ENCODE measurements at regions of chr20 and their contacts with region 1.

Region 1: DNA sequence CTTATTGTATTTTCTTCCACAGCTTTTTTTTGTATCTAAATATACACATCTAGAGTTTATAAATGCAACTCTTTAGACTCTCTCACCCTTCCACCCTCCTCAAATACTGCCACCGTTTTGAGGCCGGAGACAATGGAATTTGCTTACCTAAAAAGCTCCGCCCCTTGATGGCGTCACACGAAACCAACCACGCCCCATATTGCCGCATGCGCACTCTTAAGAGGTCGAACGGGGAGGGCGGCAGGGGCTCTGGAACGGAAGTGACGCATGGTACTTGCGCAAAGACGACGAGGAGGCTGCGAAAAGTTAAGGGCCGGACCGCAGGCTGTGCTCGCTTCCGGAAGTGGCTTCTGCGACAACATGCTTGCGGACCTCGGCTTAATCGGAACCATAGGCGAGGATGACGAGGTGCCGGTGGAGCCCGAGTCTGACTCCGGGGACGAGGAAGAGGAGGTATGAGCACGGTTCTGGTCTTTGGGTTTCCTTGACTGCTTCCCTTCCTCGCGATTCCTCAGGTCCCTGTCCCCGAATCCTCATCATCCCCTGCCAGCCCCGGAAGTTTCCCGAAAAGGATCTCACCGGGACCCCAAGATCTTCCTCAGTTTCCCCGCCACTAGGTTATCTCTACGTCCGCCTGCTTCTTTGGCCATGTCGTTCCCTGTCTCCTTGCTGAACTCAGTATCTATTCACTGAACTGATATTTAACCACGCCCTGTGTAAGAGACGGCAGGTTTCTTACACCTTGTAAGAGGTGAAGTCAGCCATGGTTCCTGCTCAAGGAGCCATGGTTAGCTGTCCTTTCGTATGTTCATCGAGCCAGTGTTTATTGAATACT is at the start of gene DDX27:
- DNase-seq: peak; percentile 92 to 99 (median 96)
- ATAC-seq: peak; percentile 79
- H3K4me3 ChIP-seq: peak within 1 kb of the TSS; percentile 90 to 99
- H3K4me3 Mint-ChIP-seq: peak within 1 kb of the TSS; percentile 91
- H3K27ac ChIP-seq: peak within 1 kb of the TSS; percentile 91 to 95
- H3K27ac Mint-ChIP-seq: peak within 1 kb of the TSS; percentile 96
- H3K4me1 ChIP-seq: peaks cover 13% of the 10 kb centered on the region
- H3K4me1 Mint-ChIP-seq: peaks cover 30% of the 10 kb centered on the region
- H3K27me3 ChIP-seq: no peaks in the 10 kb centered on the region
- H3K27me3 Mint-ChIP-seq: no peaks in the 10 kb centered on the region
- CTCF ChIP-seq: no peak
- total RNA-seq, gene DDX27: 129 to 141 TPM

Region 2: DNA sequence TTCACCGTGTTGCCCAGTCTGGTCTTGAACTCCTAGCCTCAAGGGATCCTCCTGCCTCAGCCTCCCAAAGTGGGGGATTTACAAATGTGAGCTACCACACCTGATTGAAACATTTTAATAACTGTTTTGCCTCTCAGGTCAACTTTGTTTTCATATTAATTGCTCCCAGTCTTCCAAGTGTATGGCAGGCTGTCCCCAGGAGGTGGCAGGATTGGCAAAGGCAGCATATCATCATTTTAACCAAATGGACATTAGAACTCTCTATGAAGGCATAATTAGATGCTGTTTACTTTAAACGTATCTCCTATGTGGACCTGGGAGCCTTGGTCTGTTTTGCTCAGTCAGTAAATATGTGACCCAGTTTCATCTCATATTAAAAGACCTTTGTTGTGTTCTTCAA is 232.4 kb before region 1 on chr20:
- CTCF ChIA-PET with region 1: interaction called, 10 read pairs
- POLR2A ChIA-PET with region 1: no interaction called
- intact Hi-C with region 1: no loop called
- DNase-seq: no peak
- ATAC-seq: no peak
- H3K4me3 ChIP-seq: no peak overlapping the region
- H3K4me3 Mint-ChIP-seq: no peak overlapping the region
- H3K27ac ChIP-seq: no peak overlapping the region
- H3K27ac Mint-ChIP-seq: no peak overlapping the region
- H3K4me1 ChIP-seq: no peaks in the 10 kb centered on the region
- H3K4me1 Mint-ChIP-seq: no peaks in the 10 kb centered on the region
- H3K27me3 ChIP-seq: no peaks in the 10 kb centered on the region
- H3K27me3 Mint-ChIP-seq: no peaks in the 10 kb centered on the region
- CTCF ChIP-seq: no peak

Region 3: GRCh38 chr20:49132995-49133478 is 86.3 kb before region 1 on chr20:
- CTCF ChIA-PET with region 1: interaction called, 174 read pairs
- POLR2A ChIA-PET with region 1: interaction called, 6 read pairs
- intact Hi-C with region 1: loop called (anchors 1 kb)
- DNase-seq: peak in 3 of 9 experiments; percentile 18 to 75 (median 65)
- ATAC-seq: peak; percentile 55
- H3K4me3 ChIP-seq: no peak overlapping the region
- H3K4me3 Mint-ChIP-seq: no peak overlapping the region
- H3K27ac ChIP-seq: no peak overlapping the region
- H3K27ac Mint-ChIP-seq: no peak overlapping the region
- H3K4me1 ChIP-seq: no peaks in the 10 kb centered on the region
- H3K4me1 Mint-ChIP-seq: peaks cover 5% of the 10 kb centered on the region
- H3K27me3 ChIP-seq: no peaks in the 10 kb centered on the region
- H3K27me3 Mint-ChIP-seq: no peaks in the 10 kb centered on the region
- CTCF ChIP-seq: peak; percentile 63

Region 4: GRCh38 chr20:49186535-49187329 is 32.6 kb before region 1 on chr20:
- CTCF ChIA-PET with region 1: interaction called, 29 read pairs
- POLR2A ChIA-PET with region 1: interaction called, 9 read pairs
- intact Hi-C with region 1: loop called (anchors 1 kb)
- DNase-seq: peak; percentile 22 to 84 (median 69)
- ATAC-seq: peak; percentile 41
- H3K4me3 ChIP-seq: peak overlapping the region; percentile 67 to 82
- H3K4me3 Mint-ChIP-seq: peak overlapping the region; percentile 85
- H3K27ac ChIP-seq: peak overlapping the region; percentile 46 to 81
- H3K27ac Mint-ChIP-seq: peak overlapping the region; percentile 77
- H3K4me1 ChIP-seq: peaks cover 41% of the 10 kb centered on the region
- H3K4me1 Mint-ChIP-seq: peaks cover 47% of the 10 kb centered on the region
- H3K27me3 ChIP-seq: peaks cover 0 to 2% of the 10 kb centered on the region in 2 experiments
- H3K27me3 Mint-ChIP-seq: no peaks in the 10 kb centered on the region
- CTCF ChIP-seq: no peak

Region 5: GRCh38 chr20:49936153-49937027 is 717.1 kb after region 1 on chr20 and contains the start of gene RNF114:
- CTCF ChIA-PET with region 1: no interaction called
- POLR2A ChIA-PET with region 1: no interaction called
- intact Hi-C with region 1: loop called (anchors 2 to 5 kb)
- DNase-seq: peak; percentile 82 to 95 (median 90)
- ATAC-seq: peak; percentile 96
- H3K4me3 ChIP-seq: peak within 1 kb of the TSS; percentile 96 to 99
- H3K4me3 Mint-ChIP-seq: peak within 1 kb of the TSS; percentile 98
- H3K27ac ChIP-seq: peak within 1 kb of the TSS; percentile 89 to 95
- H3K27ac Mint-ChIP-seq: peak within 1 kb of the TSS; percentile 96
- H3K4me1 ChIP-seq: peaks cover 30% of the 10 kb centered on the region
- H3K4me1 Mint-ChIP-seq: peaks cover 46% of the 10 kb centered on the region
- H3K27me3 ChIP-seq: no peaks in the 10 kb centered on the region
- H3K27me3 Mint-ChIP-seq: no peaks in the 10 kb centered on the region
- CTCF ChIP-seq: no peak
- total RNA-seq, gene RNF114: 137 to 151 TPM